ENCODE measurements at regions of chr10 and their contacts with region 1.

Region 1: DNA sequence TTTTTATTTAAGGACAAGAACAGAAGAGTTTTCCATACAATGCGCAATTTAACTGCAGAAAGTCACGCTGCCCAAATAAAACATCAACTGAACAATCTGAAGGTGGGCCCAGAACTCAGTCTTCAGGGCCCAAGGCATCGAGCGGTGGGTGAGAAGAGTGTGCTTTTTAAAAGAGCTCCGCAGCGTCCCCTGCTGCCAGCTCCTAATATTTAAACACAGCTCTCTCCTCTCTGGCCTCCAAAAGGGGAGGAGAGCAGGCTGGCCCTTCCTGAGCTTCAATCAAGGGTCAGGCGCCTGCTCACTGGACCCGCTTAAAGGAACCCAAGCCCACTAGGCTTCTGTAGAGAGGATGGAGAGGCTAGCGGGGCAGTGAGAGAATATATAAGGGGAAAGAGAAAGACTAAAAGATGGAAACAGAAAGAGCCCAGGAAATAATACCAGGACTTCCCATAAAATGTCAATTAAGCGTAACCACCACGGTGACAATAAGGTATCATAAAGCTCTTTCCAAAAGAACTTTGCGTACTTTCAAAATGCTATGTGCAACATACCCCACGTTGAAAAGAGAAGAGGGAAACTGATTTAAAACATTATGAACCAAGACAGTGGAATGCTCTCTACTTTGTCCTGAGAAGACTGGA is 2.8 kb downstream of the FAM53B start:
- DNase-seq: peak; percentile 83
- H3K4me3 ChIP-seq: peak overlapping the region in 1 of 2 donors; percentile 9
- H3K27ac ChIP-seq: peak overlapping the region; percentile 66 to 76
- H3K4me1 ChIP-seq: peaks cover 30% of the 10 kb centered on the region
- H3K27me3 ChIP-seq: no peaks in the 10 kb centered on the region
- CTCF ChIP-seq: peak; percentile 60 to 94 (median 88)
- POLR2A ChIP-seq: peak; percentile 38

Region 2: GRCh38 chr10:124539935-124540641 is 201.3 kb before region 1 on chr10:
- intact Hi-C with region 1: loop called (anchors 2 kb)
- DNase-seq: peak; percentile 46
- H3K4me3 ChIP-seq: no peak overlapping the region
- H3K27ac ChIP-seq: no peak overlapping the region
- H3K4me1 ChIP-seq: no peaks in the 10 kb centered on the region
- H3K27me3 ChIP-seq: no peaks in the 10 kb centered on the region
- CTCF ChIP-seq: peak; percentile 50 to 91 (median 80)
- POLR2A ChIP-seq: no peak

Region 3: GRCh38 chr10:124632064-124632531 is 109.3 kb before region 1 on chr10:
- intact Hi-C with region 1: loop called (anchors 5 kb)
- DNase-seq: peak; percentile 87
- H3K4me3 ChIP-seq: no peak overlapping the region
- H3K27ac ChIP-seq: peak overlapping the region; percentile 52 to 73
- H3K4me1 ChIP-seq: peaks cover 12% of the 10 kb centered on the region
- H3K27me3 ChIP-seq: no peaks in the 10 kb centered on the region
- CTCF ChIP-seq: peak; percentile 19 to 79 (median 68)
- POLR2A ChIP-seq: no peak

Region 4: DNA sequence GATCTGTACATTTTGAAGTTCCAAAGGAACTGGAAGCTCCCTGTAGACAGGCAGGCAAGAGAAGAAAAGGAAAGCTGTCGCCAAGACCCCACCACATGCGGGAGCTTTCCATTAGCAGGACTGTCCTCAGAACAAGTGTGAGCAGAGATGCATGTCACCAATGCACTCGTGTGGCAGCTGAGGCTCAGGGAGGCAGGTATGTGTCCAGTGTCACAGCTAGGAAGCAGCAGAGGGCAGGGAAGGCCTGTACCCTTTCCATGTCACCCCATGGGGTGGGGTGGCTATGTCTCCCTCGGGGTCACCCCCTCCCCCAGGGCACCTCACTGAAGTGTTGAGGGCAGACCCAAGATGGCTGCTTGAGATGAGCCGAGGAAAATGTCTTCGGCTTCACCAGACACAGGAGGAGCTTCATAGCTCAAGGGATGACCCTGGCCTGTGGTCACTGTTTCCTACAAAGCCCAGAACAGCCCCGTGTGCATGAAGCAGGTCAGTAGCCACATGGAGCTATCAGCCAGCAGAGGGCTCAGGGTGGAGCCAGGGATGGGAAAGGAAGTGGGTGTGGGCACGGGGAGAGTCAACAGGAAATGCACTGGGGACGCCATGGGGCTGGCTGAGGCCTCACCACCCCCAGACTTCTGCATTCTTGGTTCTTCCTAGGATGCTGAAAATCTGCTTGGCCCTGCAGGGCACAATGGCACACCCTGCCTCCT is 93.8 kb before region 1 on chr10:
- intact Hi-C with region 1: loop called (anchors 5 kb)
- DNase-seq: no peak
- H3K4me3 ChIP-seq: no peak overlapping the region
- H3K27ac ChIP-seq: peak overlapping the region; percentile 3 to 28
- H3K4me1 ChIP-seq: peaks cover 5% of the 10 kb centered on the region
- H3K27me3 ChIP-seq: no peaks in the 10 kb centered on the region
- CTCF ChIP-seq: no peak
- POLR2A ChIP-seq: no peak

Region 5: GRCh38 chr10:124703778-124704427 is 37.5 kb before region 1 on chr10:
- intact Hi-C with region 1: loop called (anchors 2 kb)
- DNase-seq: no peak
- H3K4me3 ChIP-seq: no peak overlapping the region
- H3K27ac ChIP-seq: peak overlapping the region; percentile 69
- H3K4me1 ChIP-seq: peaks cover 26% of the 10 kb centered on the region
- H3K27me3 ChIP-seq: no peaks in the 10 kb centered on the region
- CTCF ChIP-seq: no peak
- POLR2A ChIP-seq: no peak

Region 6: DNA sequence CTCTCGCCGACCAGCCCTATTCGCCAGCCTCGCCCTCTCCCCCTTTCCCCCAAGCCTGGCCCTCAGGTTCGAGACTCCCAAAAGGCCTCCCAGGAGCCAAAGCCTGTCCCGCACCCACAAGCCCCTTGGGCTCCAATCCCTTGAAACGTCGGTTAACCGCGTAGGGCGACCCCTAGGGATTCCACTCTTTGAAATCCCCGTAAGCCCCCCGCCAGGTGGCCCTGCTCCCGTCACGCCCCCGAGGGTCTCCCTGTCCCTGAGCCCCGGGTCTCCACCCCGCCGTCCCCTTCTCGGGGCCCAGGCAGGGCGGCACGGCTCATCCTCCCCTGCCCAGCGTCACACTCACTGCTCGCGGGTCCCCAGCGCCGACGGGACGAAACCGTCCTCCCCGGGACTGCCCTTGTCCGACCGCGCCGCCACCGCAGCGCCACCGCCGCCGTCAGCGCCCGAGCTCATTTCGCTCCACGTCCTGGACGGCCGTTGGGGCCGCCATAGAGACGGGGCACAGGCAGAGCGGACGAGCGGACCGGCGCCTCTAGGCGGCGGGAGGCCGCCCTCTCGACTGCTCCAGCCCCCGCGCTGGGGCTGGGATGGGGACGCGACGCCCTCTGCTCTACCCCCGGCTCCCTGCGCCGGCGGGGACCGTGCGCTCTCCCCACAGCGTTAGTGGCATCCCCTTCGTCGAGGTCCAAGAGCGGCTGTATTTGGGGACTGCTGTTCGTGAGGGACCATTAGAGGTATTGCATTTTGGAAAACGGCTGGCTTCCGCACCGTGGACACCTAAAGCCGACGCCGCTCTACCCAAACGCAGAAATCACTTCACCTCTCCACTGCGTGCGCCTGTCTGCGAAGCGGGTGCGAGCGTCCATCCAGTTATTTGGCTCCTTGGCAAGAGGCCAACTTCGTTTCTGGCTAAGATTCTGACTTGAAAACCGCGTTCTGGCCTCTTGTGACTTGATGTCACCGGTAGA is 50.3 kb after region 1 on chr10 and contains the start of gene EEF1AKMT2:
- intact Hi-C with region 1: loop called (anchors 5 kb)
- DNase-seq: peak; percentile 75
- H3K4me3 ChIP-seq: peak within 1 kb of the TSS; percentile 78 to 97
- H3K27ac ChIP-seq: peak within 1 kb of the TSS; percentile 81 to 85
- H3K4me1 ChIP-seq: no peaks in the 10 kb centered on the region
- H3K27me3 ChIP-seq: no peaks in the 10 kb centered on the region
- CTCF ChIP-seq: peak; percentile 48 to 73 (median 60)
- POLR2A ChIP-seq: peak; percentile 41
- total RNA-seq, gene EEF1AKMT2: 15.7 to 20.5 TPM

Region 7: DNA sequence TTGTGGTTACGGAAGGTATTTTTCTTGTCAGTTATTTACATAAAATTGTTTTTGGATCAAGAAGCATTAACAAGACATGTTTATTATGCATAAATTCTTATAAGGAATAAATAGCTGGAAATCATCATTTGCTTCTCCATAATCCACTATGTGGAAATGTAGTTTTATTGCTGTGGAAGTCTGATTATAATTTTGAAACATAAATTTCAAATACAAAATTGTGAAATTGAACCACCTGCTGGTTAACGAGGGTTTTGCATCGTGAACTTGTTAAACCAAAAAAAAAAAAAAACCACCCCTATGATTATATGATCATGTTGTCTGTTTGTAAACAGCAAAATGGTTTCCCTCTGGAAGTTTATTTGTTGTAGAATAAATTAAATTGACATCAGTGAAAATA is 86.1 kb after region 1 on chr10:
- intact Hi-C with region 1: loop called (anchors 5 kb)
- DNase-seq: no peak
- H3K4me3 ChIP-seq: no peak overlapping the region
- H3K27ac ChIP-seq: no peak overlapping the region
- H3K4me1 ChIP-seq: no peaks in the 10 kb centered on the region
- H3K27me3 ChIP-seq: no peaks in the 10 kb centered on the region
- CTCF ChIP-seq: peak in 3 of 4 experiments; percentile 51 to 67 (median 65)
- POLR2A ChIP-seq: no peak

Region 8: GRCh38 chr10:125103924-125104323 is 362.5 kb after region 1 on chr10:
- intact Hi-C with region 1: no loop called
- DNase-seq: no peak
- H3K4me3 ChIP-seq: no peak overlapping the region
- H3K27ac ChIP-seq: no peak overlapping the region
- H3K4me1 ChIP-seq: no peaks in the 10 kb centered on the region
- H3K27me3 ChIP-seq: no peaks in the 10 kb centered on the region
- CTCF ChIP-seq: no peak
- POLR2A ChIP-seq: no peak